Left ventricle myocardium superior (tissue), 1 donor: ENCODE measurements at regions of chr7 and their contacts with region 1.

Region 1: DNA sequence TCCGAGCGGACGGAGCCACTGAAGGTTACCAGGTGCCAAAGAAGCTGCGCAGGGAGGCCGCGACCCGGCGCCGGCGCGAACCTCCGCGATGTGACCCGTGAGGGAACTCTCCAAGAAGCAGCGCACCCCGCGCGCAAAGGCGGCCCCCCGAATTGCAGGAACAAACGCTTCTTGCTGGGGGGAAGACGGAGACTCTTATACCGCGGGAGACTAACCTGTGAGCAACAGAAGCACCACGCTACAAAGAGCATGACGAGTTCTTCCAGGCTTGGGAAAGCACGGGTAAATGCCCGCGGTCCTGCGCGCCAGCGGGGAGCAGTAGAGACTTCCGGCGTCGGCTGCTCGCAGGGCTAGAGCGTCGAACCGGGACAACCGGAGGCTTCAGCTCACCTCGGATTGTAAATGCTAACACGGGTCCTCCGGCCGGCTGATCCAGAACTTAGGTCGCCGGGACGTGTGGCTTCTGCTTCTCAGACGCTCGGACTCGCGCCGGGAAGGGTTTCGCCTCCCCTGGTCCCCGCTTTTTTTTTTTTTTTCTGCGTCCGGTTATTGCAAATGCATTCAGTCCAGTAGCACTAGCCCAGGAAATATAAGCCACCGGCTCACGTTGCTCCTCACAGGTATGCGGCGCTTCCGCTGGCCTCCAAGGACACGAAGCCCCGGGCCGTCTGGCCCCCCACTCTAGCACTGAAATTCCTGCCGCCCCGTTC is at the start of gene COA1:
- DNase-seq: peak; percentile 91
- ATAC-seq: peak; percentile 99
- total RNA-seq, gene COA1: 72.5 TPM

Region 2: DNA sequence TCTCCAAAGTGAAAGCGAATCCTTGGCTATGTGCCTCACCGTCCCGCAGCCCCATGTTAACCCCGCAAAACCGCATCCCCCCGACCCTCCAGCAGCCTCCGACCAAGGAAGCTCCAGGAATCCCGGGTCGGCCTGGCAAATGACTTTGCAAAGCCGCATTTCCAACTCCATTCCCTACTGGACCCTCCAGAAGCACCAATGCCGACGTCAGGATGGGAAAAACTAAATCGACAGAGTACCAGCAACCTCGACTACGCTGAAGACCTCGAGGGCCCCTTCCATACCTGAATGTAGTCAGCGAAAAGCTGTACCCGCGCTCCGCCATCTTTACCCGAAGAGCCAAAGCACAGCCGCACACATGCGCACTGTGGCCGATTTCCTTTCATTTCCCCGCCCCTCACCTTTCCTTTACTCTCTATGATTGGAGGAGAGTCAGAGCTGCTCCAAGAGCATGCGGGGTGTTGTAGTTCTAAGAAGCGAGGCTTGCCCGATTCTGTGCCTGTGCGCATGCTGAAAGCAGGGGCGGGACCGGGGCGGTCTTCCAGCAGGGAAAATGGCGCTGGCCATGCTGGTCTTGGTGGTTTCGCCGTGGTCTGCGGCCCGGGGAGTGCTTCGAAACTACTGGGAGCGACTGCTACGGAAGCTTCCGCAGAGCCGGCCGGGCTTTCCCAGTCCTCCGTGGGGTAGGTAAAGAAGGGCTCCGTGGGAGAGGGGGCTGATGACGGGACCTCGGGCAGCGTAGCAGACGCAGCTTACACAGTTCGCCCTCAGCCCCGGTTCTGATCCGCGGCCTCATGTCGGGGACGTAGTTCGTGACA is 797.3 kb before region 1 on chr7 and contains the starts of genes MRPL32 and PSMA2:
- intact Hi-C with region 1: loop called (anchors 10 kb)
- DNase-seq: peak; percentile 95
- ATAC-seq: peak; percentile 100
- total RNA-seq, gene MRPL32: 68.7 TPM
- total RNA-seq, gene PSMA2: 90.1 TPM